ENCODE measurements at regions of chrX and their contacts with region 1.

Region 1: DNA sequence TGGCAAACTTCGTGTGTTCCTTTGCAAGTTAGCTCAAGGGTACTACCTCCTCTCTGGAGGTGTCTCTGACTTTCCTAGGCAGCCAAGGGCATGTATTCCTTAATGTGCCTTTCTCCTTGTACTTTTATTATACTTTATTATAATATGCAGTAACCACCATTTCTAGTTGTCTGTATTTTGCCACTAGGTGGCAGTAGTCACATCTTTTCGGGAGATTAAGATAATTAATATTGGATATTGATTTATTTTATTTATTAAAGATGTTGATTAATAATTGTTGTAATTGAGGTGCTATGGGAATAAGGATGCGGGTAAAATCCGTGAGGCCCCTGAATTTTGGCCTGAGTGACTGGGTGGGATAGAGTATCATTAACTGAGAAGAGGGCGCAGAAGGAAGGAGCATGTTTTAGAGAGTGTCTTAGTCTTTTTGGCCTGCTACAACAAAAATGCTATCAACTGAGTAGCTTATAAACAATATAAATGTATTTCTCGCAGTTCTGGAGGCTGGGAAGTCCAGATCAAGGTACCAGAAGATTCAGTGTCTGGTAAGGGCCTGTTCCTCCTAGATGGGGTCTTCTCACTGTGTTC is 153.3 kb downstream of the TMEM164 start:
- DNase-seq: peak in 1 of 5 donors; percentile 10
- H3K4me3 ChIP-seq: no peak overlapping the region
- H3K4me3 Mint-ChIP-seq: no peak overlapping the region
- H3K27ac ChIP-seq: no peak overlapping the region
- H3K27ac Mint-ChIP-seq: no peak overlapping the region
- H3K4me1 ChIP-seq: no peaks in the 10 kb centered on the region
- H3K4me1 Mint-ChIP-seq: peaks cover 8 to 9% (median 8%) of the 10 kb centered on the region in 3 donors
- H3K27me3 ChIP-seq: no peaks in the 10 kb centered on the region
- H3K27me3 Mint-ChIP-seq: peaks cover 0 to 3% of the 10 kb centered on the region in 2 donors

Region 2: GRCh38 chrX:110046001-110046400 is 110.3 kb before region 1 on chrX:
- CTCF ChIA-PET with region 1: no interaction called
- POLR2A ChIA-PET with region 1: no interaction called
- DNase-seq: no peak
- H3K4me3 ChIP-seq: no peak overlapping the region
- H3K4me3 Mint-ChIP-seq: no peak overlapping the region
- H3K27ac ChIP-seq: no peak overlapping the region
- H3K27ac Mint-ChIP-seq: no peak overlapping the region
- H3K4me1 ChIP-seq: no peaks in the 10 kb centered on the region
- H3K4me1 Mint-ChIP-seq: peaks cover 16 to 42% (median 29%) of the 10 kb centered on the region in 3 donors
- H3K27me3 ChIP-seq: no peaks in the 10 kb centered on the region
- H3K27me3 Mint-ChIP-seq: peaks cover 0 to 1% of the 10 kb centered on the region in 2 donors

Region 3: GRCh38 chrX:110412971-110413721 is 256.9 kb after region 1 on chrX:
- CTCF ChIA-PET with region 1: interaction called, 211 read pairs
- POLR2A ChIA-PET with region 1: no interaction called
- DNase-seq: peak; percentile 45 to 71 (median 46)
- H3K4me3 ChIP-seq: no peak overlapping the region
- H3K4me3 Mint-ChIP-seq: no peak overlapping the region
- H3K27ac ChIP-seq: no peak overlapping the region
- H3K27ac Mint-ChIP-seq: no peak overlapping the region
- H3K4me1 ChIP-seq: no peaks in the 10 kb centered on the region
- H3K4me1 Mint-ChIP-seq: peaks cover 3 to 6% (median 4%) of the 10 kb centered on the region in 3 donors
- H3K27me3 ChIP-seq: no peaks in the 10 kb centered on the region
- H3K27me3 Mint-ChIP-seq: peaks cover 7 to 10% of the 10 kb centered on the region in 2 donors